ENCODE measurements at regions of chr22 and their contacts with region 1.

Region 1: GRCh38 chr22:43993027-43993760 is 30.9 kb upstream of the PARVB start:
- DNase-seq: peak; percentile 30 to 79 (median 61)
- ATAC-seq: peak; percentile 72
- H3K4me3 ChIP-seq: no peak overlapping the region
- H3K4me3 Mint-ChIP-seq: no peak overlapping the region
- H3K27ac ChIP-seq: no peak overlapping the region
- H3K27ac Mint-ChIP-seq: no peak overlapping the region
- H3K4me1 ChIP-seq: peaks cover 15% of the 10 kb centered on the region
- H3K4me1 Mint-ChIP-seq: peaks cover 27% of the 10 kb centered on the region
- H3K27me3 ChIP-seq: no peaks in the 10 kb centered on the region
- H3K27me3 Mint-ChIP-seq: no peaks in the 10 kb centered on the region
- CTCF ChIP-seq: peak; percentile 95

Region 2: DNA sequence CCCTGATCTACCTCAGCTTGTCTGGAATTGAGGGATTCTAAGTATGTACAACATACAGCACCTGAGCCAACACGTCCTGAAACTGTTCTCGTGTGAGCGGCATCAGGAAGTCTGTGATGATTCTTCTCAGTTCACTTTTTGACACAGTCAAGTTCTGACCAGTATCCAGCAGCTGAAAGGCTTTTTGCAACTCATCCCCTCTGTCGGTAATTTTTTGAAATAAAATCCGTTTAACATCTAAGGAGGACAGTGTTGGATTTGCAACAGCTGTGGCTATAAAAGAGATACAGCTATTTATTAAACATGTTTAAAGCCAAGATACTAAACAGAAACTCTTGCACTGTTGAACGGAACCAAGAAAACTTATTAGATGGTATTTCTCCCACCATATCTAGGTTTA is 220.4 kb before region 1 on chr22:
- CTCF ChIA-PET with region 1: no interaction called
- POLR2A ChIA-PET with region 1: no interaction called
- intact Hi-C with region 1: no loop called
- DNase-seq: no peak
- ATAC-seq: no peak
- H3K4me3 ChIP-seq: no peak overlapping the region
- H3K4me3 Mint-ChIP-seq: no peak overlapping the region
- H3K27ac ChIP-seq: no peak overlapping the region
- H3K27ac Mint-ChIP-seq: no peak overlapping the region
- H3K4me1 ChIP-seq: no peaks in the 10 kb centered on the region
- H3K4me1 Mint-ChIP-seq: no peaks in the 10 kb centered on the region
- H3K27me3 ChIP-seq: no peaks in the 10 kb centered on the region
- H3K27me3 Mint-ChIP-seq: peaks cover 7% of the 10 kb centered on the region
- CTCF ChIP-seq: no peak

Region 3: GRCh38 chr22:43980996-43981395 is 12.2 kb before region 1 on chr22:
- CTCF ChIA-PET with region 1: interaction called, 19 read pairs
- POLR2A ChIA-PET with region 1: interaction called, 3 read pairs
- intact Hi-C with region 1: no loop called
- DNase-seq: no peak
- ATAC-seq: no peak
- H3K4me3 ChIP-seq: no peak overlapping the region
- H3K4me3 Mint-ChIP-seq: no peak overlapping the region
- H3K27ac ChIP-seq: no peak overlapping the region
- H3K27ac Mint-ChIP-seq: no peak overlapping the region
- H3K4me1 ChIP-seq: no peaks in the 10 kb centered on the region
- H3K4me1 Mint-ChIP-seq: no peaks in the 10 kb centered on the region
- H3K27me3 ChIP-seq: no peaks in the 10 kb centered on the region
- H3K27me3 Mint-ChIP-seq: no peaks in the 10 kb centered on the region
- CTCF ChIP-seq: no peak

Region 4: DNA sequence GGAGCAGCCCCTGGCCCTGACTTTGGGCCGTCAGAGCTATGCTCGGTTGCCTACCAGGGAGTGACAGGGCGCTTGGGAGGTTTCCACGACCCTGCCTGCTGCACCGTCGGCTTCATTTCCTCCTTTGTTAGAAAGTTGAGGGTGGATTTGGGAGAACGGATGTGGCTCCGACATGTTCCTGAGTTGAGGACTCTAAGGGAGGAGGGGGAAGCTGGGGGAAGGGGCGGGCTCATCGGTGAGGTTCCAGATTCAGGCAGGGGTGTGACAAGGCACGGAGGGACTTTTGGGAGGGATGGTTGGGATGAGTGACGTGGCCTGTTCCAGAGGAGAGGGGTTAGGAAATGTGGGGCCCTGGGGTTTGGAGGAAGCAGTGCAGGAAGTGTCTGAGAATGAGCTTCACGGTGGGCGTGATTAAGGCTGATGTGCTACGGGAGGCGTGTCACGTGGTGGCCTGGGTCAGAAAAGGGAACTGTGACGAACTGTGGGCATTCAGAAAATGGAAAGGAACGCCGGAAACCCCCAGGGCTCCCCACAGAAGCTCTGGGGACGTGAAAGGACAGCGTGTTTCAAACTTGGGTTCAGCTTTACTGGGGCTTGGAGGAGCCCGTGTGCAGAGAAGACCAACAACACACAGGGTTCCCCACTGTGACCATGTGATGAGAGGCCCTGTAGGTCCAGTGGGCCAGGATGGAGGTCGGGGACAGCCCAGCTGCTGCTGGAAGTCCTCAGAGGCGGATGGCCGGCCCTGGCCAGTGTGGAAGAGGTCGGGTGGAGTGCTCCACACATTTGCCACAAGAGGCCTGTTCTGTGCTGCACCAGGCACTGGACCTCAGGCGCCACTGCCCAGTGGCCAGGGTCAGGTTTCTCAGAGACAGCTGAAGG is 33.7 kb after region 1 on chr22:
- CTCF ChIA-PET with region 1: interaction called, 8 read pairs
- POLR2A ChIA-PET with region 1: no interaction called
- intact Hi-C with region 1: loop called in 1 of 2 experiments (anchors 2 kb)
- DNase-seq: peak; percentile 29 to 93 (median 63)
- ATAC-seq: peak; percentile 79
- H3K4me3 ChIP-seq: peak overlapping the region in 1 of 2 experiments; percentile 39
- H3K4me3 Mint-ChIP-seq: peak overlapping the region; percentile 75
- H3K27ac ChIP-seq: peak overlapping the region; percentile 25 to 79
- H3K27ac Mint-ChIP-seq: peak overlapping the region; percentile 89
- H3K4me1 ChIP-seq: peaks cover 26% of the 10 kb centered on the region
- H3K4me1 Mint-ChIP-seq: peaks cover 38% of the 10 kb centered on the region
- H3K27me3 ChIP-seq: no peaks in the 10 kb centered on the region
- H3K27me3 Mint-ChIP-seq: peaks cover 12% of the 10 kb centered on the region
- CTCF ChIP-seq: no peak

Region 5: DNA sequence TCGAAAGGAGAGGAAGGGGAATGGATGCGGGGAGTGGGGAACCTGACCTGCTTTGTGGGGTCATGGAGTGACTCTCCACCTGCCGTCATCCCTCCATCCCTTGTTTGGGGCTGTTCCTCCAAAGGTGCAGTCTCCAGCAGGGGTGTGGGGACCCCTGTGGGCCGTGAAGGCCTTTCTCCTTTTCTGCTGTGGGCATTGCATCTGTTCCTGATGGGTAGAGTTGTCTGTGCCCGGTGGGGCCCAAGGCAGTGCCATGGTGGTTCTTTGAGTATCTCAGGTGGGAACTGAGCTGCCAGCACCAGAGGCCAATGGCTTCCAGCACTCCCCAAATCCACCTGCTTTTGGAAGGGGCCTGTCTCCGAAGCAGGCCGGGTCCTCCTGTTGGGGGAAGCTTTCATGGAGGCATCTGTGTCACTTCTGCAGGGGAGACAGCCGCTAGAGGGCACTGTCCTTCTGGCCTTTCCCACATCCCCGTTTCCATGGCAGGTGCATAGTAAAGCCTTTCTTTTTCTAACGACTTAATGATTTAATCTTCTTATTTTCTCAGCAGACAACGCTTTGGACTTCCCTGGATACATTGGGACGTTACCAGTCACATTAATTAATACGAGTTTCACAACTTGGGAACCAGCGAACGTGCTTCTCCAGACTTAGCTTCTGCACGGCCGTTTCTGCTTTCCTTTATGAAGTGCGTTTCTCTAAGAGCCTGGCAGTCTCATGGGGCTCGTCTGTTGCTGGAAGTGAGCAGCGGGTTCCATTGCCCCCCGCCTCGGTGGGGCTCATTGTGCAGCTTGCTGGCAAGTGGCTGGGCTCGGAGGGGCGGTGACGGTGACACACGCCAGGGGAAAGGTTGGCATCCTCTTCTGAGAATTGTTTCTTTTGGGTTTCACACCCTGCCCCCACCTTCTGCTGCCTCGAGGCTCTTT is 88.0 kb after region 1 on chr22:
- CTCF ChIA-PET with region 1: interaction called, 76 read pairs
- POLR2A ChIA-PET with region 1: no interaction called
- intact Hi-C with region 1: loop called (anchors 2 to 5 kb)
- DNase-seq: peak; percentile 46 to 83 (median 75)
- ATAC-seq: peak; percentile 57
- H3K4me3 ChIP-seq: peak overlapping the region in 1 of 2 experiments; percentile 33
- H3K4me3 Mint-ChIP-seq: no peak overlapping the region
- H3K27ac ChIP-seq: no peak overlapping the region
- H3K27ac Mint-ChIP-seq: no peak overlapping the region
- H3K4me1 ChIP-seq: peaks cover 4% of the 10 kb centered on the region
- H3K4me1 Mint-ChIP-seq: no peaks in the 10 kb centered on the region
- H3K27me3 ChIP-seq: no peaks in the 10 kb centered on the region
- H3K27me3 Mint-ChIP-seq: no peaks in the 10 kb centered on the region
- CTCF ChIP-seq: peak; percentile 69

Region 6: GRCh38 chr22:44625981-44626687 is 632.9 kb after region 1 on chr22:
- CTCF ChIA-PET with region 1: interaction called, 110 read pairs
- POLR2A ChIA-PET with region 1: interaction called, 3 read pairs
- intact Hi-C with region 1: loop called in 1 of 2 experiments (anchors 1 kb)
- DNase-seq: peak; percentile 72 to 91 (median 81)
- ATAC-seq: peak; percentile 90
- H3K4me3 ChIP-seq: no peak overlapping the region
- H3K4me3 Mint-ChIP-seq: no peak overlapping the region
- H3K27ac ChIP-seq: no peak overlapping the region
- H3K27ac Mint-ChIP-seq: no peak overlapping the region
- H3K4me1 ChIP-seq: peaks cover 6% of the 10 kb centered on the region
- H3K4me1 Mint-ChIP-seq: peaks cover 5% of the 10 kb centered on the region
- H3K27me3 ChIP-seq: no peaks in the 10 kb centered on the region
- H3K27me3 Mint-ChIP-seq: no peaks in the 10 kb centered on the region
- CTCF ChIP-seq: peak; percentile 97

Region 7: GRCh38 chr22:44684506-44685383 is 691.6 kb after region 1 on chr22:
- CTCF ChIA-PET with region 1: interaction called, 10 read pairs
- POLR2A ChIA-PET with region 1: no interaction called
- intact Hi-C with region 1: no loop called
- DNase-seq: peak; percentile 72 to 92 (median 84)
- ATAC-seq: peak; percentile 82
- H3K4me3 ChIP-seq: no peak overlapping the region
- H3K4me3 Mint-ChIP-seq: peak overlapping the region; percentile 58
- H3K27ac ChIP-seq: no peak overlapping the region
- H3K27ac Mint-ChIP-seq: peak overlapping the region; percentile 74
- H3K4me1 ChIP-seq: peaks cover 50% of the 10 kb centered on the region
- H3K4me1 Mint-ChIP-seq: peaks cover 45% of the 10 kb centered on the region
- H3K27me3 ChIP-seq: no peaks in the 10 kb centered on the region
- H3K27me3 Mint-ChIP-seq: no peaks in the 10 kb centered on the region
- CTCF ChIP-seq: peak; percentile 95